Endothelial cell of umbilical vein (primary cell): ENCODE measurements at regions of chr22 and their contacts with region 1.

Region 1: DNA sequence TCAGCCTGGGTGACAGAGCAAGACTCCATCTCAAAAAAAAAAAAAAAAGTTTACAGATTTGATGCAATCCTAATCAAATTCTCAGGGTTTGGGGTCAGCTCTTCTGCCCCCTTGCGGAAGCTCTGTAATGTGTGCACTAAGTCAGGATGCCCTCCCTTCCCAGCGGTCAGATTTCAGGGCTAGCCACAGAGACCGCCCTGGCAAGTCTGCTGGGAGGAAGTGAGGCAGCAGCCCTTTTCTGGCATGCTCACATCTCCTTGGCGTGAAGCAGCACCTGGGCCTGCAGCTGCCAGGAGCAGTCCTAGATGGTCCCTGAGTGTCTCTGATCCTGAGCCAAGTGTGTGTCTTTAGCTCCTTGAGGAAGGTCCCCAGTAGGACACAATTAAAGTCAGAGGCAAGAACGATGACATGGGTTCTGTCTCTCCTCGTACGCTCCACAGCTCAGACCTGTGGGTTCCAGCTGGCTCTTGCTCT is 10.9 kb upstream of the APOBEC3C start:
- DNase-seq: peak; percentile 83
- H3K4me3 ChIP-seq: no peak overlapping the region
- H3K27ac ChIP-seq: no peak overlapping the region
- H3K4me1 ChIP-seq: no peaks in the 10 kb centered on the region
- H3K27me3 ChIP-seq: no peaks in the 10 kb centered on the region
- CTCF ChIP-seq: peak; percentile 67 to 72
- POLR2A ChIP-seq: no peak

Region 2: DNA sequence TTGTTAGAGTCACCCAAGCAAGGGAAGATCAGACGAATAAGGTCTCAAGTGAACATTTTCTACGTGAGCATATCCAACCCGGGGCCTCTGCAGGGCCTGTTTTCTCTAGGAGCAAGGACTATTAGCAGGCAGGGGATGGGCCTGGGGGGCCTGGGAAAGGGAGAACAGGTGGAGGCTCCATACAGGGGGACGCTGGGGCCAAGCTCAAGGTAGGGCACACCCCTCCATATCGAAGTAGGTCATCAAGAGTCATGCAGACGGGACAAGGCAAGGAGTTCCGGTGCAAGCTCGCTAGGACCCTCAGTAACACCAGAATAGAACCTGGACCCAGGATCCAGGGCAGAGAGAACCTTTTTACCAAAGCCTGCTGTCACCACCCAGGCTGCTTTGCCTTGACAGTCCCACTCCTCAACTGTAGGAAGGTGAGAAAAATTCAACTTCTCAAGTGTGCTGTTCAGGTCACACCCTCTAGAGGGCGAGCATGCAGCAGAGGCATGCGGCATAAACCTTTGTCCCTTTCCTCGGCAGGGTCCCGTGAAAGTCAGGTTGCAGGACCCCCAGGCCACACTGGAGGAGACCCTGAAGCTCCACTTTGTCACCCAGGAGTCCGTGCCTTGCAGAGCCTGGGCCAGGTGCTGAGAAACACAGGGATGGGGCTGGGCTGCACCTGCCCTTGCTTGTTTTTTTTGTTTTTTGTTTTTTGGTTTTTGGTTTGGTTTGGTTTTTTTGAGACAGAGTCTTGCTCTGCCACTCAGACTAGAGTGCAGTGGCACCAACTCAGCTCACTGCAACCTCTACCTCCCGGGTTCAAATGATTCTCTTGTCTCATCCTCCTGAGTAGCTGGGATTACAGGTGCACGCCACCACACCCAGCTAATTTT is 29.7 kb before region 1 on chr22:
- CTCF ChIA-PET with region 1: interaction called, 26 read pairs
- POLR2A ChIA-PET with region 1: no interaction called
- dilution Hi-C with region 1: no loop called
- intact Hi-C with region 1: loop called (anchors 1 kb)
- DNase-seq: peak; percentile 46
- H3K4me3 ChIP-seq: no peak overlapping the region
- H3K27ac ChIP-seq: no peak overlapping the region
- H3K4me1 ChIP-seq: no peaks in the 10 kb centered on the region
- H3K27me3 ChIP-seq: no peaks in the 10 kb centered on the region
- CTCF ChIP-seq: peak; percentile 74 to 83
- POLR2A ChIP-seq: no peak

Region 3: DNA sequence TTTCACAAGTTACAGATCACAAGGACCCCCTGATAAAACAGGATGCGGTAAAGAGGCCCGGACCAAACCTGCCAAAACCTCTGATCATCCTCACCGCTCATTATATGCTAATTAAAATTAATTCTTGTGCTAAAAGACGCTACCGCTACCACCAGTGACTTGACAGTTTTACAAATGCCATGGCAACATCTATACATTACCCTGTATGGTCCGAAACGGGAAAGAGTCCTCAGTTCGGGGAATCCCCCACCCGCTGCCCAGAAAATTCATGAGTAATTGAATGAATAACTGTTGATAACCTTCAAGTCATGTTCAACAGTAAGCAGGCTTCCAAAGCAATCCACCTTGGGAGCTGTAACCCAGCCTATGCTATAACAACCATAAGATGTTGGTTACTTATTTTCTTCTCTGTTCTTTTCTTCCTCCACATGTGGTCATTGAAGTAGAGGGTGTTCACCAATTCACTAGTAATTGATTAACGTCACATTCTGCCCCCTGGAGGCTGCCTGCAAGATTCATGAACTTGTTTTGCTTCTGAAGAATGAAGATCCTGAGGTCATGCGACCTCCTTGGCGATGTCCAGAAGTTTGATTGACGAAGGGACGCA is 114.5 kb after region 1 on chr22:
- CTCF ChIA-PET with region 1: interaction called, 70 read pairs
- POLR2A ChIA-PET with region 1: no interaction called
- dilution Hi-C with region 1: no loop called
- intact Hi-C with region 1: loop called (anchors 1 kb)
- DNase-seq: peak; percentile 57
- H3K4me3 ChIP-seq: no peak overlapping the region
- H3K27ac ChIP-seq: no peak overlapping the region
- H3K4me1 ChIP-seq: no peaks in the 10 kb centered on the region
- H3K27me3 ChIP-seq: peaks cover 18 to 29% of the 10 kb centered on the region in 2 experiments
- CTCF ChIP-seq: peak; percentile 36 to 51
- POLR2A ChIP-seq: no peak

Region 4: GRCh38 chr22:39123751-39124601 is 120.8 kb after region 1 on chr22:
- CTCF ChIA-PET with region 1: interaction called, 70 read pairs
- POLR2A ChIA-PET with region 1: no interaction called
- dilution Hi-C with region 1: no loop called
- intact Hi-C with region 1: no loop called
- DNase-seq: no peak
- H3K4me3 ChIP-seq: no peak overlapping the region
- H3K27ac ChIP-seq: no peak overlapping the region
- H3K4me1 ChIP-seq: no peaks in the 10 kb centered on the region
- H3K27me3 ChIP-seq: peaks cover 3 to 4% of the 10 kb centered on the region in 2 experiments
- CTCF ChIP-seq: no peak
- POLR2A ChIP-seq: no peak